ENCODE measurements at regions of chr13 and their contacts with region 1.

Region 1: GRCh38 chr13:23506807-23507291 is 63.4 kb upstream of the TNFRSF19 start:
- DNase-seq: no peak
- H3K4me3 ChIP-seq: no peak overlapping the region
- H3K27ac ChIP-seq: no peak overlapping the region
- H3K4me1 ChIP-seq: peaks cover 2% of the 10 kb centered on the region
- H3K27me3 ChIP-seq: no peaks in the 10 kb centered on the region
- CTCF ChIP-seq: no peak
- EP300 ChIP-seq: no peak
- POLR2A ChIP-seq: no peak

Region 2: GRCh38 chr13:21723807-21724505 is 1782.9 kb before region 1 on chr13:
- intact Hi-C with region 1: loop called in 1 of 4 experiments (anchors 10 kb)
- DNase-seq: no peak
- H3K4me3 ChIP-seq: no peak overlapping the region
- H3K27ac ChIP-seq: no peak overlapping the region
- H3K4me1 ChIP-seq: no peaks in the 10 kb centered on the region
- H3K27me3 ChIP-seq: no peaks in the 10 kb centered on the region
- CTCF ChIP-seq: no peak
- EP300 ChIP-seq: no peak
- POLR2A ChIP-seq: no peak

Region 3: DNA sequence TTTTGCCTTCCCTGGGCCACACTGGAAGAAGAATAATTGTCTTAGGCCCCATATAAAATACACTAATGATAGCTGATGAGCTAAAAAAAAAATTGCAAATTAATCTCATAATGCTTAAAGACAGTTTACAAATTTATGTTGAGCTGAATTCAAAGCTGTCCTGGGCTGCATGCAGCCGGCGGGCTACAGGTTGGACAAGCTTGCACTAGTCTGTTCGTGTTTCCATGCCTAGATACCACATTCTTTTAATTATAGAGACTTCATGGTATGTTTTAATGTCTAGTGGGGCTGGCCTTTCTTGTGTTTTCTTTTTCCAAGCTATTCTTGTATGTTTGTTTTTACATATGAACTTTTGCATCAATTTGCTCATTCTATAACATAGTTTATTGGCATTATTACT is 235.5 kb before region 1 on chr13:
- intact Hi-C with region 1: no loop called
- DNase-seq: no peak
- H3K4me3 ChIP-seq: no peak overlapping the region
- H3K27ac ChIP-seq: no peak overlapping the region
- H3K4me1 ChIP-seq: no peaks in the 10 kb centered on the region
- H3K27me3 ChIP-seq: no peaks in the 10 kb centered on the region
- CTCF ChIP-seq: no peak
- EP300 ChIP-seq: no peak
- POLR2A ChIP-seq: no peak

Region 4: GRCh38 chr13:23570099-23570920 is 63.5 kb after region 1 on chr13 and contains the start of gene TNFRSF19:
- intact Hi-C with region 1: no loop called
- DNase-seq: no peak
- H3K4me3 ChIP-seq: no peak within 1 kb of the TSS
- H3K27ac ChIP-seq: no peak within 1 kb of the TSS
- H3K4me1 ChIP-seq: no peaks in the 10 kb centered on the region
- H3K27me3 ChIP-seq: no peaks in the 10 kb centered on the region
- CTCF ChIP-seq: no peak
- EP300 ChIP-seq: no peak
- POLR2A ChIP-seq: no peak
- total RNA-seq, gene TNFRSF19: 2.6 to 15.3 (median 5.6) TPM

Measured in ovary (tissue), 10 donors.